ENCODE measurements at regions of chrX and their contacts with region 1.

Region 1: DNA sequence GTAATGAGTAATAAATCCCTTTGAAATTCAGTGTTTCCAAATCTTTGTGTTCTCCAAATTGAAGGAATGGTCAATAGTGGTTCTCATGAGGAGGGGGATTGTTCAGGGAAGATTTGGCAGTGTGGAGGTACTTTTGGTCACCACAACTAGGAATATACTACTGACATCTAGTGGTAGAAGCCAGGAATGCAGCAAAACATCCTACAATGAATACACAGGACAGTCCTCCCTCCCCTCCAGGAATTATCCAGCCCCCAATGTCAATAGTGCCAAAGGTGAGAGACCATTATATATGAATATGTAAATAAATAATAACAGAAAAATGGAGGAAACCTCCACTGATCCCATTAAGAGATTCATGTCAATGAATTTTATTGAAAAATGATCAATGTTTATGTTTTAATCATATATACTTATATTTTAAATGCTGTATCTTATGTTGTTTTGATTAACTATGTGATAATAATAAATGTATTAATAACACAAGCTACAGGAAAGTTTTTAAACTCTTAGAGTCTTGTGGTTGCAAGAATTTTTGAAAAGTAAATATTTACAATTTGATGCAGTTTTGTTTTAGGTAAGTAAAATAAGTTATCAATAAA is 14.4 kb upstream of the FAM9A start:
- DNase-seq: peak; percentile 73
- H3K4me3 Mint-ChIP-seq: no peak overlapping the region
- H3K27ac Mint-ChIP-seq: no peak overlapping the region
- H3K4me1 Mint-ChIP-seq: no peaks in the 10 kb centered on the region
- H3K27me3 Mint-ChIP-seq: no peaks in the 10 kb centered on the region

Region 2: GRCh38 chrX:8749697-8750096 is 65.9 kb before region 1 on chrX:
- intact Hi-C with region 1: loop called (anchors 5 kb)
- DNase-seq: no peak
- H3K4me3 Mint-ChIP-seq: no peak overlapping the region
- H3K27ac Mint-ChIP-seq: no peak overlapping the region
- H3K4me1 Mint-ChIP-seq: peaks cover 1% of the 10 kb centered on the region
- H3K27me3 Mint-ChIP-seq: peaks cover 6% of the 10 kb centered on the region

Region 3: GRCh38 chrX:8773117-8773516 is 42.4 kb before region 1 on chrX:
- intact Hi-C with region 1: no loop called
- DNase-seq: no peak
- H3K4me3 Mint-ChIP-seq: no peak overlapping the region
- H3K27ac Mint-ChIP-seq: no peak overlapping the region
- H3K4me1 Mint-ChIP-seq: no peaks in the 10 kb centered on the region
- H3K27me3 Mint-ChIP-seq: peaks cover 10% of the 10 kb centered on the region

Region 4: GRCh38 chrX:8783100-8784098 is 32.2 kb before region 1 on chrX:
- intact Hi-C with region 1: loop called (anchors 1 kb)
- DNase-seq: peak; percentile 74
- H3K4me3 Mint-ChIP-seq: peak overlapping the region; percentile 32
- H3K27ac Mint-ChIP-seq: no peak overlapping the region
- H3K4me1 Mint-ChIP-seq: peaks cover 2% of the 10 kb centered on the region
- H3K27me3 Mint-ChIP-seq: no peaks in the 10 kb centered on the region

Region 5: DNA sequence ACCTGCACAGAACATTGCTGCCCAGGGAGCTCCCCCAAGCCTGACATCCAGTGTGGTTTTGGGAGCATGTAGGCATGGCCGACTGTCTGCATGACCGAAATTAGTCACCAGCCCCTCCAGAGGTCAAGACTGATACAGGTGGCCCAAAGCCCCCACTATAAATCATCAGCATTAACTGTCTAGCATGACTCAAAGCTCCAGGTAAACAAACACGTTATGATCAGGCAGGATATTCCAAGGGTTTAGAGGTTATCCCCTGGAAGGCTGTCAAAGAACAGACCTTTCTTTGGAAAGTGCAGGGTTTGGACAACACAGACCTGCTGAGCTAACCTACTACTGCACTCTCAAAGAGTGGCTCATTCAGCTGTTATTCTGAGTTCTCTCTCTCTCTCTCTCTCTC is 12.2 kb before region 1 on chrX:
- intact Hi-C with region 1: no loop called
- DNase-seq: no peak
- H3K4me3 Mint-ChIP-seq: no peak overlapping the region
- H3K27ac Mint-ChIP-seq: no peak overlapping the region
- H3K4me1 Mint-ChIP-seq: no peaks in the 10 kb centered on the region
- H3K27me3 Mint-ChIP-seq: peaks cover 5% of the 10 kb centered on the region

Region 6: GRCh38 chrX:9644335-9644734 is 828.8 kb after region 1 on chrX:
- intact Hi-C with region 1: no loop called
- DNase-seq: peak; percentile 80
- H3K4me3 Mint-ChIP-seq: peak overlapping the region; percentile 30
- H3K27ac Mint-ChIP-seq: no peak overlapping the region
- H3K4me1 Mint-ChIP-seq: peaks cover 19% of the 10 kb centered on the region
- H3K27me3 Mint-ChIP-seq: no peaks in the 10 kb centered on the region

Region 7: GRCh38 chrX:9708904-9709553 is 893.5 kb after region 1 on chrX:
- intact Hi-C with region 1: loop called (anchors 2 kb)
- DNase-seq: peak; percentile 92
- H3K4me3 Mint-ChIP-seq: no peak overlapping the region
- H3K27ac Mint-ChIP-seq: no peak overlapping the region
- H3K4me1 Mint-ChIP-seq: peaks cover 8% of the 10 kb centered on the region
- H3K27me3 Mint-ChIP-seq: no peaks in the 10 kb centered on the region

Measured in activated CD4-positive, alpha-beta T cell treated with anti-CD3 and anti-CD28 coated beads, Interleukin-2, amount 10 ng/mL, durations not matched to agents 24 days and 14 days (primary cell).